ENCODE measurements at regions of chr6 and their contacts with region 1.

Region 1: GRCh38 chr6:144602523-144603180 is 317.5 kb downstream of the UTRN start:
- DNase-seq: peak; percentile 52
- H3K4me3 Mint-ChIP-seq: no peak overlapping the region
- H3K27ac Mint-ChIP-seq: no peak overlapping the region
- H3K4me1 Mint-ChIP-seq: peaks cover 46% of the 10 kb centered on the region
- H3K27me3 Mint-ChIP-seq: no peaks in the 10 kb centered on the region

Region 2: GRCh38 chr6:144162977-144163376 is 439.7 kb before region 1 on chr6:
- CTCF ChIA-PET with region 1: no interaction called
- intact Hi-C with region 1: no loop called
- DNase-seq: no peak
- H3K4me3 Mint-ChIP-seq: no peak overlapping the region
- H3K27ac Mint-ChIP-seq: no peak overlapping the region
- H3K4me1 Mint-ChIP-seq: no peaks in the 10 kb centered on the region
- H3K27me3 Mint-ChIP-seq: no peaks in the 10 kb centered on the region

Region 3: GRCh38 chr6:144613859-144614258 is 11.2 kb after region 1 on chr6:
- CTCF ChIA-PET with region 1: interaction called, 6 read pairs
- intact Hi-C with region 1: loop called (anchors 1 kb)
- DNase-seq: no peak
- H3K4me3 Mint-ChIP-seq: no peak overlapping the region
- H3K27ac Mint-ChIP-seq: no peak overlapping the region
- H3K4me1 Mint-ChIP-seq: peaks cover 15% of the 10 kb centered on the region
- H3K27me3 Mint-ChIP-seq: no peaks in the 10 kb centered on the region